Activated T-helper 1 cell treated with anti-CD3 and anti-CD28 coated beads, Interleukin-12 subunit alpha, Interleukin-12 subunit beta, Interleukin-2, Interleukin-4 antibody, amounts not matched to agents 30 ng/mL and 10 ng/mL and 1 ng/mL, durations not matched to agents 14 hours and 24 hours and 36 hours (primary cell): ENCODE measurements at regions of chr22 and their contacts with region 1.

Region 1: GRCh38 chr22:21666786-21667185 is 974 bp downstream of the PPIL2 start:
- DNase-seq: no peak
- H3K4me3 Mint-ChIP-seq: peak overlapping the region; percentile 99
- H3K27ac Mint-ChIP-seq: peak overlapping the region; percentile 97
- H3K4me1 Mint-ChIP-seq: peaks cover 30% of the 10 kb centered on the region
- H3K27me3 Mint-ChIP-seq: no peaks in the 10 kb centered on the region

Region 2: DNA sequence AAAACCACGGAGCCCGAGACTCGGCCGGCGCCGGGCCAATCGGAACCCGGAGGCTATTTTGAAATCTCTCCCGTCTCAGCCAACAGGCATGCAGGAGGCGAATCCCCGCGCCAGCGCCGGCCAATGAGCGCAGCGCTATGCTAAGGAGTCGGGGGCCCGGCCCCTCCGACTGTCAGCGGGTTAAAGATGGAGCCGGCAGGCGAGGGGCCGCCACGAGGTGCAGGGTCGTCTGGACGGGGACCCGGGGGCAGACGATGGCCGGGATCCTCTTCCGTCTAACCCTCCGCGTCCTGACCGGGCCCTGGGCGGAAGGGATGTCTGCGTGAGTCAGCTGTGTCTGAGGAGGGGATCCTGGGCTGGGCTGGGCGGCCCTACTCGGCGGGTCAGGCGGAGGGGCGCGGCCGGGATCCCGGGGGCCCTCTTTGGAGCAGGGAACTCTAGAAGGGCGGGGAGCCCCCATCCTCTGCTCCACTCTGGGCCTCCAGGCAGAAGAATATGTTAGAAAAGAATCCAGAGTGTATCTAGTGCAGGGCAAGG is 14.7 kb before region 1 on chr22:
- intact Hi-C with region 1: loop called (anchors 1 kb)
- DNase-seq: peak; percentile 88
- H3K4me3 Mint-ChIP-seq: peak overlapping the region; percentile 88
- H3K27ac Mint-ChIP-seq: peak overlapping the region; percentile 80
- H3K4me1 Mint-ChIP-seq: peaks cover 34% of the 10 kb centered on the region
- H3K27me3 Mint-ChIP-seq: no peaks in the 10 kb centered on the region

Region 3: GRCh38 chr22:21698430-21699329 is 31.9 kb after region 1 on chr22:
- intact Hi-C with region 1: no loop called
- DNase-seq: no peak
- H3K4me3 Mint-ChIP-seq: no peak overlapping the region
- H3K27ac Mint-ChIP-seq: no peak overlapping the region
- H3K4me1 Mint-ChIP-seq: no peaks in the 10 kb centered on the region
- H3K27me3 Mint-ChIP-seq: no peaks in the 10 kb centered on the region

Region 4: GRCh38 chr22:21778705-21779363 is 112.0 kb after region 1 on chr22:
- intact Hi-C with region 1: no loop called
- DNase-seq: no peak
- H3K4me3 Mint-ChIP-seq: no peak overlapping the region
- H3K27ac Mint-ChIP-seq: no peak overlapping the region
- H3K4me1 Mint-ChIP-seq: peaks cover 22% of the 10 kb centered on the region
- H3K27me3 Mint-ChIP-seq: no peaks in the 10 kb centered on the region